Activated CD4-positive, alpha-beta T cell treated with anti-CD3 and anti-CD28 coated beads, Interleukin-2, amount 10 ng/mL, durations not matched to agents 24 days and 14 days (primary cell): ENCODE measurements at regions of chr6 and their contacts with region 1.

Region 1: DNA sequence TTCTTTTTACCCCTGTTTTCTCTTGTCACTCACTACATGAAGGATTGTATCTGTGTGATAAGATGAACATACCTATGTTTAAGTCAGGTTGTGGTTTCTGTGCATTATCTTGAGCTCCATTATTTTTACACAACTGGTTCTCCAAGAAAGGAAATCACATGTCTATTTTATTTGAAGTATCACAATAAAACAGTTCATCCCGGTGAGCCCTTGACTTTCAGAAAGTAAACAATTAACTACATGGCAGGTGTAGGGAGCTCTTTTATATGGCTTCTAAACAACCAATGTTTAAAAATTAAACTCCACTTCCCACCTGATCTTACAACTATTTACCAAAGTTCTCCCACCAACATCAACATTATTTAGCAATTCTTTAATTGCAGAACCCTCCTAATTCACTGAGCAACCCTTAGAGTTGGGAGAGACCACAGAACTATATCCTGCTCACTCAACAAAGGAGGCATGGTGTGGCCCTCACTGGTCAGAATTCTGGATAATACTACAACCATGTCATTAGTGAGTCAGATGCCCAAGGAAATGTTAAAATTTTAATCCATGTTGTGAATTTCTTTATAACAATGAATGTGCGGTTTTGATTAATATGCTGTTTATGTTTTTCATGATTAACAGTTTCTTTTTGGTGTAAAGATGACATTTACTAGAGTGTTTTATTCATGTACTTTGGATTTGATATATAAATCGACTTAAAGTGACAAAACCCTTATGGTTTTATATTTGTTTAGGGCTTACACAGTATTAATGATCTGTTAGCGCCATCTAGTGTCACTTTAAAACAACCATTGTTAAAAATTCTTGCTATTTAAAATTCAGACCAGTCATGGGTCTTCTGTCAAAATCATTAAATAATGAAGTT is 50.0 kb upstream of the SCGN start:
- DNase-seq: no peak
- H3K4me3 Mint-ChIP-seq: no peak overlapping the region
- H3K27ac Mint-ChIP-seq: no peak overlapping the region
- H3K4me1 Mint-ChIP-seq: peaks cover 2% of the 10 kb centered on the region
- H3K27me3 Mint-ChIP-seq: no peaks in the 10 kb centered on the region

Region 2: GRCh38 chr6:25263657-25264056 is 338.4 kb before region 1 on chr6:
- intact Hi-C with region 1: loop called (anchors 1 kb)
- DNase-seq: no peak
- H3K4me3 Mint-ChIP-seq: no peak overlapping the region
- H3K27ac Mint-ChIP-seq: no peak overlapping the region
- H3K4me1 Mint-ChIP-seq: no peaks in the 10 kb centered on the region
- H3K27me3 Mint-ChIP-seq: peaks cover 22% of the 10 kb centered on the region